Keratinocyte (primary cell): ENCODE measurements at regions of chr3 and their contacts with region 1.

Region 1: GRCh38 chr3:56988458-56989168 is 71.9 kb upstream of the SPATA12 start:
- DNase-seq: no peak
- H3K4me3 ChIP-seq: no peak overlapping the region
- H3K27ac ChIP-seq: no peak overlapping the region
- H3K4me1 ChIP-seq: no peaks in the 10 kb centered on the region
- H3K27me3 ChIP-seq: no peaks in the 10 kb centered on the region
- CTCF ChIP-seq: peak; percentile 64 to 79 (median 65)

Region 2: DNA sequence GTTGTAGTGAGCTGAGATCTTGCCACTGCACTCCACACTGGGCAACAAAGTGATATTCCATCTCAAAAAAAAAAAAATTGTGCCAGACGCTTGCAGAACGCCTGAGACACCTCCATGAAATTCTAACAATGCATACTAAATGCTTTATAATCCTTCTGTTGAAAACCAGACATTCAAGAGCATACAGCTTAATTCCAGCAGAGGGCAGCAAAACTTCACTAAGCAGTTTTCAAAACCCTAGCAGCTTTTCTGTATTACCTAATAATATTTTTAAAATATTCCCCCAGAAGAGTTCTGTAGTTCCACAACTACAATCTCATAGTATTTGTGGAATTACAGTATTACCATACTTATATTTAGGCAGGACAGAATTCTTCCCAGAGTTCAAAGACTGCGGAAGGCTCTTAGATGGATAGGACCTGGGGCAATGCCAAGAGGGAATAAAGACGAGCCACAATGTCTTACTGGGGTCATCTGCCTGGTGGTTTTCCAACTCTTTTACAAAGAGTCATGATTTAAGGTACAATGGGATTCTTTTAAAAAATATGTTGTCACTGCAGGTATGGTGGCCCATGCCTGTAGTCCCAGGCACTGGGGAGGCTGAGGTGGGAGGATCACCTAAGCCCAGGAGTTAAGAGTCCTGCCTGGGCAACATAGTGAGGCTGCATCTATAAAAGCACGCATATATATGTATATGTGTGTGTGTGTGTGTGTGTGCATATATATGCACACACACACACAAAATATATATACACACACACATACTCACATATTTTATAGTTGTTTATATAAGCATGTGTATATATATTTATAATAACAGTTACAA is 285.9 kb before region 1 on chr3:
- dilution Hi-C with region 1: loop called (anchors 25 kb)
- DNase-seq: no peak
- H3K4me3 ChIP-seq: no peak overlapping the region
- H3K27ac ChIP-seq: no peak overlapping the region
- H3K4me1 ChIP-seq: peaks cover 11% of the 10 kb centered on the region
- H3K27me3 ChIP-seq: no peaks in the 10 kb centered on the region
- CTCF ChIP-seq: peak in 2 of 3 experiments; percentile 59 to 62

Region 3: DNA sequence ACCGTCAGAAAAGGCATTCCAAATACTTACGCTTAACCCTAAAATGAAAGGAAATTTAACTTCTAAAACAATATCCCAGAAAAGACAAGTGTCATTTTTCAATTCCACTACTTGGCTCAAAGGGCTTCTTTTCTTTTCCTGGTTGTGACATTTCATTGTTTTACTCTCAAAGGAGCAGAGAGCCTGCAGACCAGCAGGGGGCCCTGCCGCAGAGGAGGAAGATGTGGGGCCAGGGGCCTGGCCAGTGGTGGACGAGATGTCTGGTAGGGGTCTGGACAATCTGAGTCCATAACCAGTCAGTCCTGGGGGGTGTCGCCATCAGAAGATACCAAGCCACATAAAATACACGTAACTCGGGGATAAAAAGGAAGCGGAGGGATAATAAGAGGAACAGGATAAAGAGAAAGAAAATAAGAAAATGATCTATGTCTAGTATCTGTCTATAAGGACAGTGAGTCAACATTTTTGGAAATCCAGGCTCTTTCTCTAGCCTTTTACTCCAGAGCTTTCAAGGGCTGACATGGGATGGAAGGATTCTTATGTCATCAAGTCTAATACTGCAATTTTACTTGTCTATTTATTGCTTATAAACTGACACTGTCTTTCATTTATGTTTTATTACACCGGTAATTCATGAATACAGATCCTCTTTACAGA is 132.6 kb before region 1 on chr3:
- dilution Hi-C with region 1: no loop called
- DNase-seq: no peak
- H3K4me3 ChIP-seq: no peak overlapping the region
- H3K27ac ChIP-seq: no peak overlapping the region
- H3K4me1 ChIP-seq: peaks cover 24% of the 10 kb centered on the region
- H3K27me3 ChIP-seq: no peaks in the 10 kb centered on the region
- CTCF ChIP-seq: peak; percentile 51 to 68 (median 57)

Region 4: DNA sequence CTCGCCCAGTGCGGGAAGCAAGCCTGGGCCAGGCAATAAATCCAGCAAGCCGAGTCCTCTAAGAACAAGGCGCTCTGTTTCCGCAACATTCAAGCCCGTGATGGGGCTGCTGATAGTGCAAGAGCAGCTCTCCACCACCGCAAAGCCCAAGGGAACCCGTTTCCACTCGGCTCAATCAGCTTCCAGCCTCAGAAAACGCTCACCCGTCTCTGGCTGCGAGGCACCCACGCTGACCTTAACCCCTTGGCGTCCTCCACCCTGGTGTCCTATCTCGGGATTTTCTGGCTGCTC is 89.7 kb after region 1 on chr3:
- dilution Hi-C with region 1: loop called (anchors 25 kb)
- DNase-seq: no peak
- H3K4me3 ChIP-seq: peak overlapping the region; percentile 67 to 80 (median 80)
- H3K27ac ChIP-seq: no peak overlapping the region
- H3K4me1 ChIP-seq: peaks cover 13% of the 10 kb centered on the region
- H3K27me3 ChIP-seq: no peaks in the 10 kb centered on the region
- CTCF ChIP-seq: no peak

Region 5: GRCh38 chr3:57227204-57227929 is 238.8 kb after region 1 on chr3 and contains the start of gene APPL1:
- dilution Hi-C with region 1: no loop called
- DNase-seq: no peak
- H3K4me3 ChIP-seq: peak within 1 kb of the TSS; percentile 67 to 94 (median 88)
- H3K27ac ChIP-seq: peak within 1 kb of the TSS; percentile 76
- H3K4me1 ChIP-seq: peaks cover 28% of the 10 kb centered on the region
- H3K27me3 ChIP-seq: no peaks in the 10 kb centered on the region
- CTCF ChIP-seq: no peak
- polyA plus RNA-seq, gene APPL1: 15.1 to 25.6 TPM (median 17.3 TPM) in 3 replicates